Activated CD4-positive, alpha-beta memory T cell treated with anti-CD3 and anti-CD28 coated beads for 36 hours (primary cell): ENCODE measurements at regions of chr12 and their contacts with region 1.

Region 1: DNA sequence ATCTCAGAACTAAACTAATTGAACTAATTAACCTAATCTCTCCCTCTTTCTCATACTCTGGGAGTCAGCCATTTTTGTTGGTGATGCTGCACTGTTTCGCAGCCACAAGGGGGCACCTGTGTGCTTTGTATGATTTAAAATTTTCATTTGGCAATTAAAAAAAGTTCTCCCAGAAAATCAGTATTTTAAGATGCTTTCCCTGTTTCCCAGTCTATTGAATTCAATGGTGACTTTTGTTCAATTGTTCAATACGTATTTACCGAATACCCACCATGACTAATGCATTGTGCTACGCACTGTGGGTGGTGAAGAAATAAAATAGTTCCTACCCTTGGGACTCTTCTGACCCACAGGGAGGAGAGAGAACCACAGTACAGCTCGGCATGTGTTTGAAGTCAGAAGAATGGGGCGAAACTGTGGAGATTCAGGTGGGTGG is 63.7 kb downstream of the ZNF664 start:
- DNase-seq: peak; percentile 41
- H3K4me3 Mint-ChIP-seq: no peak overlapping the region
- H3K27ac Mint-ChIP-seq: no peak overlapping the region
- H3K4me1 Mint-ChIP-seq: no peaks in the 10 kb centered on the region
- H3K27me3 Mint-ChIP-seq: peaks cover 4% of the 10 kb centered on the region

Region 2: DNA sequence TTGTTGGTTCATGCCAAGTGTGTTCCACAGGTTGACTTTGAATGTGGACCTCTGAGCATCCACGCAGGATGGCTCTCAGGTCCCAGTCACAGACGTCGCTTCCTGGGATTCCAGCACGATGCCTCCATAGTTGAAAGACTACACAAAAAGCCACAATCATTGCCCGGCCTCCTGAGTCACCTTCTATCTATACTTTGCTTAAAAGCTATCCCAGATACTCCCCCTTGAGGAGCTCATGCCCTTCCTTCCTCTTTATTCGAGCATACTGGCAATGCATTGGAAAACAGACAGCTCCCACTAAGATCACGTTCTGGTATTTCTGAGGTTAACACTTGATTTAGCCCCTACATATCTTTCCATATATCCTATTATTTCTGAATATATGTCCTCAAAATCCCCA is 23.6 kb before region 1 on chr12:
- CTCF ChIA-PET with region 1: interaction called, 13 read pairs
- POLR2A ChIA-PET with region 1: no interaction called
- intact Hi-C with region 1: no loop called
- DNase-seq: no peak
- H3K4me3 Mint-ChIP-seq: no peak overlapping the region
- H3K27ac Mint-ChIP-seq: no peak overlapping the region
- H3K4me1 Mint-ChIP-seq: peaks cover 12% of the 10 kb centered on the region
- H3K27me3 Mint-ChIP-seq: no peaks in the 10 kb centered on the region

Region 3: GRCh38 chr12:124321040-124321481 is 284.4 kb after region 1 on chr12:
- CTCF ChIA-PET with region 1: interaction called, 8 read pairs
- POLR2A ChIA-PET with region 1: no interaction called
- intact Hi-C with region 1: loop called (anchors 2 kb)
- DNase-seq: peak; percentile 79
- H3K4me3 Mint-ChIP-seq: no peak overlapping the region
- H3K27ac Mint-ChIP-seq: no peak overlapping the region
- H3K4me1 Mint-ChIP-seq: no peaks in the 10 kb centered on the region
- H3K27me3 Mint-ChIP-seq: no peaks in the 10 kb centered on the region